Calu3 (cell line): ENCODE measurements at regions of chr6 and their contacts with region 1.

Region 1: GRCh38 chr6:163956571-163957407 is 542.3 kb downstream of the QKI start:
- DNase-seq: peak; percentile 76
- H3K4me3 Mint-ChIP-seq: no peak overlapping the region
- H3K27ac Mint-ChIP-seq: no peak overlapping the region
- H3K4me1 Mint-ChIP-seq: no peaks in the 10 kb centered on the region
- H3K27me3 Mint-ChIP-seq: no peaks in the 10 kb centered on the region
- CTCF ChIP-seq: peak; percentile 86

Region 2: GRCh38 chr6:163180874-163181541 is 775.8 kb before region 1 on chr6:
- CTCF ChIA-PET with region 1: no interaction called
- intact Hi-C with region 1: loop called (anchors 2 kb)
- DNase-seq: peak; percentile 84
- H3K4me3 Mint-ChIP-seq: no peak overlapping the region
- H3K27ac Mint-ChIP-seq: peak overlapping the region; percentile 97
- H3K4me1 Mint-ChIP-seq: peaks cover 23% of the 10 kb centered on the region
- H3K27me3 Mint-ChIP-seq: no peaks in the 10 kb centered on the region
- CTCF ChIP-seq: peak; percentile 74

Region 3: DNA sequence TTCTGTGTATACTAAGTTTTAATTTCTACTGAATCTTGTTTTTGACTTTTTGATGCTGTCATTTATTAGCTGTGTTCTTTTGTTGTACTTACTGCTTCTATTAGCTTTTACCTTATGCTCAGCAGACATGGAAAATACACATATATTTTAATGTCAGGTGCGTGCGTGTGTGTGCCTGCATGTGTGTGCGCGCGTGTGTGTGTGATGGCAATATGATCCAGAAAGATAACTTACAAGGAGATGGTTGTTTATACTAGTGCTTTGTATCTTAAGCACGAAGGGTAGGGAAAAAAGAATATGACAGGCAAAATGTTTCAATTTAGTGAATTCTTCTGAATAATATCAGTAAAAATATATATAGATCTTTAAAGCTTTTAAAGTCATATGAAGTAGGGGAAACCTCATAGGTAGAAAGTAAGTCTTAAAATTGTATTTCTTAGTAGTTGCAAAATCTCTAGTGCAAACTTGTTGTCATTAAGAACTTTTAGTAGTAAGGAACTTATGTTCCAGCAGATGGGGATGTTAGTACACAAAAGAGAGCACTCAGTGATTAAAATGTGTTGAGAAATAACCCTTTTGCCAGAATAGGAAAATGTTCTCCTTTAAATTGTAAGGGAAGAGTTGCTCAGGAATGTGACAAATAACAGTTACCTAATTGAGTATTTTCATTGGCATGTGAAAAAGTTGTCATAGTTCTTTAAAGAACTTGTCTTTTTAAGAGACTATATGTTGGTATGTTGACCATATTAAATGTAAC is 529.1 kb before region 1 on chr6:
- CTCF ChIA-PET with region 1: interaction called, 3 read pairs
- intact Hi-C with region 1: loop called (anchors 1 kb)
- DNase-seq: no peak
- H3K4me3 Mint-ChIP-seq: no peak overlapping the region
- H3K27ac Mint-ChIP-seq: no peak overlapping the region
- H3K4me1 Mint-ChIP-seq: peaks cover 64% of the 10 kb centered on the region
- H3K27me3 Mint-ChIP-seq: no peaks in the 10 kb centered on the region
- CTCF ChIP-seq: no peak

Region 4: DNA sequence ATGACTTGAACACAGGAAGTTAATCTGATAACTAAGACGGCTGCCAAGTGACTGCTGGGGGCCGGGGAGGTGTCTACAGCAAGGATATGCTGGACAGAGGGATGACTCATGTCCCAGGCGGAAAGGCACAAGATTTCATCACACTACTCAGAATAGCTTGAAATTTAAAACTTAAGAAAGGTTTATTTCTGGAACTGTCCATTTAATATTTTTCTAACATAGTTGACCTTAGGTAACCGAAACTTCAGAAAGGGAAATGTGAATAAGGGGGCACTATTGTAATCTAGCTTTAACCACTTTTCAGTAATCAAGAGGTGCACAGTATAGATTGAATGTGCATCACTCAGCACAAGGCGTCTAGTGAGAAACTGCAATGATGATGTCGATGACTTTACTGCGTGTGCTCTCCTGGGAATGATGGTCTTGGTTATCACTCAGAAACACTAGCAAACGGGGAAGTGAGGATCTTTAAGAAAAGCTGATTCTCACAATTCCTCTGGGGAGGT is 370.8 kb before region 1 on chr6:
- CTCF ChIA-PET with region 1: interaction called, 3 read pairs
- intact Hi-C with region 1: loop called (anchors 5 kb)
- DNase-seq: peak; percentile 66
- H3K4me3 Mint-ChIP-seq: peak overlapping the region; percentile 33
- H3K27ac Mint-ChIP-seq: peak overlapping the region; percentile 82
- H3K4me1 Mint-ChIP-seq: peaks cover 11% of the 10 kb centered on the region
- H3K27me3 Mint-ChIP-seq: no peaks in the 10 kb centered on the region
- CTCF ChIP-seq: no peak

Region 5: GRCh38 chr6:164379795-164380194 is 423.0 kb after region 1 on chr6:
- CTCF ChIA-PET with region 1: no interaction called
- intact Hi-C with region 1: no loop called
- DNase-seq: no peak
- H3K4me3 Mint-ChIP-seq: no peak overlapping the region
- H3K27ac Mint-ChIP-seq: peak overlapping the region; percentile 86
- H3K4me1 Mint-ChIP-seq: peaks cover 23% of the 10 kb centered on the region
- H3K27me3 Mint-ChIP-seq: no peaks in the 10 kb centered on the region
- CTCF ChIP-seq: no peak